HEK293 (cell line): ENCODE measurements at regions of chrX and their contacts with region 1.

Region 1: GRCh38 chrX:149470955-149471354 is 34.2 kb downstream of the IDS start:
- H3K4me3 ChIP-seq: no peak overlapping the region
- H3K27ac ChIP-seq: no peak overlapping the region
- H3K4me1 ChIP-seq: no peaks in the 10 kb centered on the region
- CTCF ChIP-seq: peak; percentile 88

Region 2: GRCh38 chrX:148049441-148049840 is 1421.5 kb before region 1 on chrX:
- CTCF ChIA-PET with region 1: interaction called, 17 read pairs
- POLR2A ChIA-PET with region 1: no interaction called
- H3K4me3 ChIP-seq: no peak overlapping the region
- H3K27ac ChIP-seq: no peak overlapping the region
- H3K4me1 ChIP-seq: no peaks in the 10 kb centered on the region
- CTCF ChIP-seq: no peak; the same call in 1 of the 2 replicates

Region 3: DNA sequence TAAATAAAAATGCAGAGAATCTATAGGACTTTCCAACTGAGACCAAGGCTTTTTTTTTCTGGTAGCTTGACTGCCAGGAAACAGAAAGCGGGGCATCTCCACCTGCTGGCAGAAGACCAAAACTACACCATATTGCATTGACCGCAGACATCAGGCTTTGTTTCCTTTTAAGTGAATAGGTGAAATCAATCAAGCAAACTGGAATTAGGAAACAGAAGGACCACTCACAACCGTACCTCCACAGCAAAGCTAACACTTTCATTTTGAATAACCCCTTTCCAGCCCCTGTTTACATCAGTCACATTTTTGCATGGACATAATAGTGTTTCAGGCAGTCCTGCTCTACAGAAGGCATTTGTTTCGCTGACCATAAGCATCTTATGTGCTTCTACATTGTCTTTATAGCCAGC is 184.0 kb before region 1 on chrX:
- CTCF ChIA-PET with region 1: interaction called, 20 read pairs
- POLR2A ChIA-PET with region 1: no interaction called
- H3K4me3 ChIP-seq: no peak overlapping the region
- H3K27ac ChIP-seq: no peak overlapping the region
- H3K4me1 ChIP-seq: no peaks in the 10 kb centered on the region
- CTCF ChIP-seq: peak; percentile 51

Region 4: DNA sequence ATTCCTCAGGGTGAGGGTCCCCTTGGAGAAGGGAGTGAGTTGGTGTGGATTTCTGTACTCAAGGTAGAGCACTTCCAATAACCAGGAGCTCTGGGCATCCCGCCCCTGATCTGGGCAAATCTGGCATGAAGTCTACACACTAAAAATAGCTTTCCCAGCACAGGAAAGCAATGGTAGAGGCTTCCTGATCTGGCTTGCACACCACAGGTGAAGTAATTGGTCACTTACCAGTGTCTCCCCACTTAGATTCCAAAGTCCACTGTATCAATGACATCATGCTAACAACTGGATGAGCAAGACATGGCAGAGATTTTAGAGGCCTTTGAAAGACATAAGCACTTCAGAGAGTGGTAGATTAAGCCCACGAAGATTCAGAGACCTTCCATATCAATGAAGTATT is 52.0 kb after region 1 on chrX:
- CTCF ChIA-PET with region 1: no interaction called
- POLR2A ChIA-PET with region 1: no interaction called
- H3K4me3 ChIP-seq: no peak overlapping the region
- H3K27ac ChIP-seq: no peak overlapping the region
- H3K4me1 ChIP-seq: no peaks in the 10 kb centered on the region
- CTCF ChIP-seq: no peak

Region 5: DNA sequence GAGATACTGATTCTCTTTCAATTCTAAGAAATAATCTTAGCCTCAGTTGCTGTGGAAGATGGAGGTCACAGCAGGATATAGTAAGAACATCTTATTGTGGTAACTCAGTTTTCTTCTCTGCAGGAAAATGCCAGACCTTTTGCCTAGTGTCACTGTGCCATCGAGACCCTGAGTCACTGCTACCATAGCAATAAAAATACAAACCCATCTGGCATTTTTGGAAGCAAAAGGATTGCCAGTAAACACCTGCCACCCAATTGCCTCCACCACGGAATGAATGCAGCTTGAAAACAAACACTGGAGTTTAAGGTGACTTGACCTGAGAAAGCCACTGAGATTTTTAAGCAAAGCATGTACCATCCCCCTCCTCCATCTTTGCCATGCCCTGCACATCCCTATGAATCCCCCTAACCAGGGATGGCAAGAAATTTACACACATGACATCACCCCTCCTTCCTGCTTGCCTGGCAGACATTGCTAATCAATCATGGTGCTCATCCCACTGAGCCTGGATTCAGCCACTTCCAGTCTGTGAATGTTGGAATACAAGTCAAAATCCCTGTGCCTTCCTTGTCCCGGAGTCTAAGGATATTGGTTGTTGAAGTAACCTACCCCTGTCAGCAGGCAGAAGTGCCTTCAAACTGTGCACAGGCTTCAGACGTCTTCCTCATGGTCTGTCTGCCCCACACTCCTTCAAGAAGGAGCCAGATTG is 832.6 kb after region 1 on chrX:
- CTCF ChIA-PET with region 1: no interaction called
- POLR2A ChIA-PET with region 1: no interaction called
- H3K4me3 ChIP-seq: no peak overlapping the region
- H3K27ac ChIP-seq: no peak overlapping the region
- H3K4me1 ChIP-seq: no peaks in the 10 kb centered on the region
- CTCF ChIP-seq: no peak